ENCODE measurements at regions of chr7 and their contacts with region 1.

Region 1: DNA sequence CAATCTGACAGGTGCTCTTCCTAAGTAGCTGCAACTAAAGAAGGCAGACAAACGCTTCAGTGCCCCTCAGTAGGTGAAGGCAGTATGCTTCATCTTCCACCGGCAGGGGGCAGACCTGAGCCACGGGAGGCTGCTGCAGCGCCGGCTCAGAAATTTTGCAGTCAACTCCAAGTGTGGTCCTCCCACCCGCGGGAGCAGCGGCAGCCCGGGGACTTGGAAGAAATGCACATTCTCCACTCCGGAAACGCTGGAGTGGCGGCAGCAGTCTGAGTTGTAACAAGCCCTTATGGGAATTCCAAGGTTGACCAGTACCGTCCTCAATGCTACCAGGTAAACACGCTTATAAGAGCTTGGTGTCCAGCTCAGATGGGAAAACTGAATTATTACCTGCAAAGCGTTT is 3.4 kb downstream of the IGFBP3 start:
- DNase-seq: no peak
- H3K4me3 ChIP-seq: peak overlapping the region in 2 of 4 donors; percentile 11 to 45
- H3K27ac ChIP-seq: no peak overlapping the region
- H3K4me1 ChIP-seq: peaks cover 14 to 40% (median 25%) of the 10 kb centered on the region in 3 donors
- H3K27me3 ChIP-seq: peaks cover 0 to 61% (median 12%) of the 10 kb centered on the region in 4 donors
- CTCF ChIP-seq: peak; percentile 66 to 94 (median 84)
- POLR2A ChIP-seq: no peak

Region 2: GRCh38 chr7:46068159-46068558 is 150.5 kb after region 1 on chr7:
- intact Hi-C with region 1: no loop called
- DNase-seq: no peak
- H3K4me3 ChIP-seq: no peak overlapping the region
- H3K27ac ChIP-seq: no peak overlapping the region
- H3K4me1 ChIP-seq: no peaks in the 10 kb centered on the region
- H3K27me3 ChIP-seq: no peaks in the 10 kb centered on the region
- CTCF ChIP-seq: no peak
- POLR2A ChIP-seq: no peak

Region 3: DNA sequence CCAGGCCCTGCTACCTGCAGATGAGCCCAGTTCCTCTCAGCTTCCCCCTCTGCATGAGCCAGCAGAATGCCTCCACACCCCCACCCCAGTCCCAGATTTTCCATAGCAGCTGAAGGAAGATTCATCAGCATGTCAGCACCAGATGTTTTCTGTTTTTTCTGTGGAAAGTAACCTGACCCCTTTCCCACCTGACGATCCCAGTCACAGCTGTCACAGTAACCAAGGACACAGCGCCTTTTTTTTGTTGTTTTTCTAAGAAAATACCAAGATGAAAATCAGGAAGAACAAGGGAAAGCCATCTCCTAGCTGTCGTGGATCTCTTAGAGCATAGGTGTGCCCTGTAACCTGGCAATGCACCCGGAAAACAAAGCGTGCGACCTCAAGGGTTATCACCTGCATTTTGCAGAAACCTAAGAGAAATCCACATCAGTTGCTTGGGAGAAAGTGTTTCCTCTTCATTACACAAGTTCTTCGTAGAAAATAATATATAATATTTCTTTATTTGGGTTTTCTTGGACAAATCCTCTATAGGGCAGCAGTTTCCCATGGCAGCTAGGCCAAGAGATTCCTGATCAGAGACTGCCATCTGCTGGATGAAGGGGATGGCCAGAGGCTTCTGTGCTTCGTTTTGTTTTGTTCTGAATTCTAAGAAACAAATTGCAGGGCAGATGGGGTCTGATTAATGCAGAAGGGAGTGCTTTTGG is 1262.3 kb after region 1 on chr7:
- intact Hi-C with region 1: loop called (anchors 5 kb)
- DNase-seq: no peak
- H3K4me3 ChIP-seq: no peak overlapping the region
- H3K27ac ChIP-seq: no peak overlapping the region
- H3K4me1 ChIP-seq: peaks cover 0 to 18% (median 0%) of the 10 kb centered on the region in 3 donors
- H3K27me3 ChIP-seq: peaks cover 0 to 4% (median 0%) of the 10 kb centered on the region in 4 donors
- CTCF ChIP-seq: peak; percentile 29 to 74 (median 62)
- POLR2A ChIP-seq: no peak

Region 4: DNA sequence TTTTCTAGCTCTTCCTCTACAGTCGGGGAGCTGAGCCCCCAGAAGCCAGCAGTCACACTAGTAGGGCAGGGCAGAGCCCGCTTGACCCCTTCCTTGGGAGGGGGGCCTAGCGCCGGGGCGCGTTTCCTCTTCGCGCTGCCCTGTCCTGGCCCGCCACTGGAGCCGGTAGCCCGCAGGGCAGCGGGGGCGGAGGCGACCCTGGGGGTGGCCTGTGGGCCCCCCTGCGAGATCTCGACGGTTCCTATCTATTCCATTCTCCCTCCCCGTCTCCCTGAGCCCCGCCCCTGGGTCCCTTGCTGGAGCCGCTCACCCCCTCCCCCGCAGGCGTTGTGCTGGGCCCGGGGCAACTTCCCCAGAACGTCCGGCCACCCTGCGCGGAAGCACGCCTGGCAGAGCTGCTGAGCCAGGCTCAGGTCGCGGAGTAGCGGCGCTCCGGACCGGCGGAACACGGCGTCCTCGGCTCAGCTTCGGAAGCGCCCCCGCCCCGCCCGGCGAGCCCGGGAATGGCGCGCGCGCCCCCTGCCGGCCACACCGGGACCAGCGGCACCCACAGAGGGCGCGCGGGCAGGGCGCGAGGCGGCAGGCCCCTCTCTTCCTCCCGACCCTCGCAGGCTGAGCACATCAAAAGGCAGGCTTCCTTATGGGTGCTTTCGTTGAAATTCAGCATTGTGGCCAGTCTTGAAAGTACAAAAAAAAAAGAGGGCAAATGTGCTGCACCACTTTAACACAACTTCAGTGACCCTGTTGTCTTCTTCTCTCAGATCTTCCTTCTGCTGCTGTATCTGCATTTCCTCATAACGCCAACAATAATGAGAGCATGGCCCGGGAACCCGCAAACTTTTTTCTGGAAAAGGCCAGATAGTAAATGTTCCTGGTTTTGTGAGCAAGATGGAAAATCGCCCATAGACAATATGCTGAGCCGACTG is 1336.7 kb after region 1 on chr7:
- intact Hi-C with region 1: loop called (anchors 10 kb)
- DNase-seq: no peak
- H3K4me3 ChIP-seq: peak overlapping the region; percentile 35 to 78 (median 54)
- H3K27ac ChIP-seq: peak overlapping the region; percentile 62 to 86 (median 86)
- H3K4me1 ChIP-seq: peaks cover 0 to 23% (median 14%) of the 10 kb centered on the region in 3 donors
- H3K27me3 ChIP-seq: no peaks in the 10 kb centered on the region
- CTCF ChIP-seq: peak; percentile 83 to 94 (median 92)
- POLR2A ChIP-seq: peak in 1 of 4 donors; percentile 29